Body of pancreas (tissue), 4 donors: ENCODE measurements at regions of chr3 and their contacts with region 1.

Region 1: GRCh38 chr3:40580494-40581091 is 55.8 kb downstream of the ZNF621 start:
- DNase-seq: peak; percentile 58 to 73 (median 63)
- ATAC-seq: no peak
- H3K4me3 ChIP-seq: no peak overlapping the region
- H3K27ac ChIP-seq: no peak overlapping the region
- H3K4me1 ChIP-seq: no peaks in the 10 kb centered on the region
- H3K27me3 ChIP-seq: no peaks in the 10 kb centered on the region
- CTCF ChIP-seq: peak; percentile 74 to 87 (median 80)
- POLR2A ChIP-seq: no peak

Region 2: GRCh38 chr3:39592352-39593050 is 988.1 kb before region 1 on chr3:
- intact Hi-C with region 1: no loop called
- DNase-seq: no peak
- ATAC-seq: no peak
- H3K4me3 ChIP-seq: no peak overlapping the region
- H3K27ac ChIP-seq: no peak overlapping the region
- H3K4me1 ChIP-seq: no peaks in the 10 kb centered on the region
- H3K27me3 ChIP-seq: no peaks in the 10 kb centered on the region
- CTCF ChIP-seq: no peak
- POLR2A ChIP-seq: no peak

Region 3: DNA sequence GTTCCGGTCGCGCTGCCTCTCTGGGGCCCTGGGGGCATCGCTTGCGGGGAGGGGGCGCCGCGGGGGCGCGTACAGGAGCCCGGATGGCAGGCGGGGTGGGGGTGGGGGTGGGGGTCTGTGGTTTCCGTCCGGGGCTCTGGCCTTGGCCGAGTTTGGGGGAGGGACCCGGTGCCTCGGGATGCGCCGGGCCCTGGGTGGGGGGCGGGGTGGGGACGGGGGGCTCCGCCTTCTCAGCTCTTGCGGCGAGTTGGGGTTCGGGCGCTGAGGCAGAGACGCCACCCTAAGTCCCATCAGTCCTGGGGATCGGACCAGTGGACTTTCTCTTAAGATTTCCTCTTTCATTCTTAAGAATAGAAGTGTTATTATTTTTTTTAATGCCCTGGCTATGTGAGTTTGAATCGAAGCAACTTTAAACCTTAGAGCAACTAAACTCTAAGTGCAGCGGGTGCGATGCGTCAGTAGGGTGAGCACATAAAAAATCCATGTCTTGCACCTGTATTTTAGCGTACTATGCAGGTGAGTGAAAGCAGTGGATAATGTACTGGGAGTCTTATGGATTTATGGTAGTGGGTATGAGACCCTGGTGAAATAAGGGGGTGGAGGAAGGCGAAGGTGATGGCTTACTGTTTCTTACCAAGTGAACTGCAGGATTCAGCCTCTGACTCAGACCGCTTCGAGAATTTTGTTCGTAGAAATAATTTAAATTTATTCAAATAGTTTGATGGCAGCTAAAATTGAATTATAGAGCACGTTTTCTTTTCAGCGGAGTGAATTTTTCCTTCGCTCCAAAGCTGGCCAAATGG is 619.5 kb after region 1 on chr3:
- intact Hi-C with region 1: loop called (anchors 5 kb)
- DNase-seq: peak; percentile 14 to 39 (median 19)
- ATAC-seq: no peak
- H3K4me3 ChIP-seq: peak overlapping the region; percentile 66 to 92
- H3K27ac ChIP-seq: peak overlapping the region; percentile 90 to 99 (median 98)
- H3K4me1 ChIP-seq: peaks cover 45% of the 10 kb centered on the region
- H3K27me3 ChIP-seq: no peaks in the 10 kb centered on the region
- CTCF ChIP-seq: no peak
- POLR2A ChIP-seq: peak in 1 of 3 donors; percentile 18

Region 4: DNA sequence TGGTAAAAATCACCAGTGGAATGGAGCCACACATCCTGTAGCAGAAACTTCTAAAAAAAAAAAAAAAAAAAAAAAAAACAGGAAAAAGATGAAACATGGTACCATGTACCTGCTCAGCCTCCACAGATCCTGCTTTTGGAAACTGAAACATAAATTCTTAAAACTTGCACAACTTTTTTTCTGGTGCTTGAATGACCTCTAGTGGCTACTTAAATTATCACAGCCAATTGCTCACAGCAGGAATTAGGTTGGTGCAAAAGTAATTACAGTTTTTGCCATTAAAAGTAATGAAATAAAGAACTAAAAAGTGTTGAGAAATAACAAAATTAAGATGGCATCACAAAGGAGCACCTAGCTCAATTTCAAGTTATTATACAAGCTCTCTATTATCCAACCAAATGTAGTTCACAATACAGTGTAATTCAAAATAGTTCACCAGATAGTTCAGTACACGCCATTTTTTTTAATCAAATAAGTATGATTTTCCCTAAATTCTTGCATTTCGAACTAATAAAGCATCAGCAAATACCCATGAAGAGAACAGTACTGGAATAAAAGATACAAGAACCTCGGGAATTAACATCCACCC is 1300.7 kb after region 1 on chr3:
- intact Hi-C with region 1: loop called (anchors 5 kb)
- DNase-seq: peak in 2 of 4 donors; percentile 14 to 20
- ATAC-seq: no peak
- H3K4me3 ChIP-seq: no peak overlapping the region
- H3K27ac ChIP-seq: no peak overlapping the region
- H3K4me1 ChIP-seq: no peaks in the 10 kb centered on the region
- H3K27me3 ChIP-seq: no peaks in the 10 kb centered on the region
- CTCF ChIP-seq: peak; percentile 29 to 92 (median 71)
- POLR2A ChIP-seq: no peak